ENCODE measurements at regions of chr4 and their contacts with region 1.

Region 1: DNA sequence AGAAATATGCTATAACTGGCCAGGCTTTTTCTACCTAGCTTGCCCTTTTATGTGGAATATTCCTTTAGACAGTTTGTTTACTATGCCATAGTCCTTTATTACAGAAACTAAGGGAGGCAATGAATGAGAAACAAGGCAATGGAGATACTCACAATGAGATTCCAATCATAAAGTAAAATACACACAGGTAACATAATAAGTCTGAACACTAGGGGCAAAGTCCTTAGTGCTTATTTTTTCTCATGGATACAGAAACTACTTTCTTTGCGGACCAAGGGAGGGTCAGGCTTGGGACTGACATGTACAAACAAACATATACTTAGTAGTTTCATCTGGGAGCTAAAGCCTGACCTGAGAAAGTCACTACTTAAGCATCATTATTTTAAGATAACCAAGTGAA is 16.0 kb upstream of the UGT8 start:
- DNase-seq: no peak
- H3K4me3 ChIP-seq: no peak overlapping the region
- H3K27ac ChIP-seq: no peak overlapping the region
- H3K4me1 ChIP-seq: no peaks in the 10 kb centered on the region
- H3K27me3 ChIP-seq: no peaks in the 10 kb centered on the region
- CTCF ChIP-seq: no peak

Region 2: GRCh38 chr4:114535725-114536124 is 46.9 kb before region 1 on chr4:
- intact Hi-C with region 1: no loop called
- DNase-seq: no peak
- H3K4me3 ChIP-seq: no peak overlapping the region
- H3K27ac ChIP-seq: no peak overlapping the region
- H3K4me1 ChIP-seq: no peaks in the 10 kb centered on the region
- H3K27me3 ChIP-seq: no peaks in the 10 kb centered on the region
- CTCF ChIP-seq: no peak

Region 3: DNA sequence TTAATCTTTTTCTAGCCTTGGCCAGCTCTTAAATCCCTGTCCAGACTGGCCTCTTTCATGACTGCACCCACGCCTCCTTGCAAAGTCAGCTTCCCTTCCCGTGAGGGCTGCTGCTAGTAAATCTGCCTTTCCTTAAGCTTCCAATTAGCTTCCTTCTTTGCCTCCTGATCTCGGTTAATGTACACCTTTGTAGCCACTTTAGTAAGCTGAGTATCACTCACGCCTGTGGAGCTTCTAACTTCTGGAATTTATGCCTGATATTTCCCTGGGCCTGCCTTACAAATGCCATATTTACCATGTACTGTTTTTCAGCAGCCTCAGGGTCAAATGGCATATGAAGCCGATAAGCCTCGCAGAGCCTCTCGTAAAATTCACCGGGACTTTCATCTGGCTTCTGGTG is 10.9 kb after region 1 on chr4:
- intact Hi-C with region 1: loop called (anchors 1 kb)
- DNase-seq: no peak
- H3K4me3 ChIP-seq: no peak overlapping the region
- H3K27ac ChIP-seq: no peak overlapping the region
- H3K4me1 ChIP-seq: peaks cover 0 to 2% of the 10 kb centered on the region in 2 donors
- H3K27me3 ChIP-seq: peaks cover 7% of the 10 kb centered on the region
- CTCF ChIP-seq: no peak